Left ventricle myocardium superior (tissue), 1 donor: ENCODE measurements at regions of chr5 and their contacts with region 1.

Region 1: GRCh38 chr5:989961-990530 is 18.6 kb upstream of the NKD2 start:
- DNase-seq: peak; percentile 82
- ATAC-seq: peak; percentile 68

Region 2: DNA sequence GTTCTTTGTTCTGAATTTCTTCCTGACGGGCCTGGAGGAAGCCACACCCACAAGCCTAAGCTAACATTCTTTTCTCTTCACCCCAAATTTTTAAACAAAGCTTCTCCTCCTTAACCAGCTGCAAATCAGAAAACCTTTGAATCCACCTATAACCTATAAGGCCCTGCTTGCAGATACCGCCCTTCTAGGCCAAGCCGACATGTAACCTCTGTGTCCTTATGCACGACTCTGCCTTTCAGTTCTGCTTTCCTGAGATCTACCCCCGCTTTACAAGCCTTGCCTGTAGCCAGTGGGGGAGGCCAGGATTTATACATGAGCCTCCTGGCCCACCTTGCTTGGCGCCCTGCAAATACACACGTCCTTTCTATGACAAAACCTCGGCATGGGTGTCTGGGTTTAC is 116.7 kb before region 1 on chr5:
- intact Hi-C with region 1: no loop called
- DNase-seq: no peak
- ATAC-seq: no peak

Region 3: DNA sequence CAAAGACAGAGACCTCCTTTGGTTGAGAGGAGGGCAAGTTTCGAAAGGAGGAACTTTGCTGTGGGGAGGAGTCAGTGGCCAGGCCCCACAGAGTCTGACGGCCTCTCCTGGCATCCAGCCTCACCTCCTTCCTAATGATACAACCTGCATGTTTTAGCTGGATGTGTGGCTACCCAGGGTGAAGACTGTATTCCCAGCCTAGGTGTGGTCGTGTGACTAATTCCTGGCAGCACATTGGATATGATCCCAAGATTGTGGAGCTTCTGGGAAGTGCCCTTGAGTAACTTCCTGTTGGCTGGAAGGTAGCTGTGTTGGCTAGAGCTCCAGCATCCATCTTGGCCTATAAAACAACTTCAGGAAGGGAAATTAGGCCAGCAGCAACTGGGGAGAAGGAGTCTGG is 552.7 kb after region 1 on chr5:
- intact Hi-C with region 1: no loop called
- DNase-seq: no peak
- ATAC-seq: peak; percentile 72

Region 4: DNA sequence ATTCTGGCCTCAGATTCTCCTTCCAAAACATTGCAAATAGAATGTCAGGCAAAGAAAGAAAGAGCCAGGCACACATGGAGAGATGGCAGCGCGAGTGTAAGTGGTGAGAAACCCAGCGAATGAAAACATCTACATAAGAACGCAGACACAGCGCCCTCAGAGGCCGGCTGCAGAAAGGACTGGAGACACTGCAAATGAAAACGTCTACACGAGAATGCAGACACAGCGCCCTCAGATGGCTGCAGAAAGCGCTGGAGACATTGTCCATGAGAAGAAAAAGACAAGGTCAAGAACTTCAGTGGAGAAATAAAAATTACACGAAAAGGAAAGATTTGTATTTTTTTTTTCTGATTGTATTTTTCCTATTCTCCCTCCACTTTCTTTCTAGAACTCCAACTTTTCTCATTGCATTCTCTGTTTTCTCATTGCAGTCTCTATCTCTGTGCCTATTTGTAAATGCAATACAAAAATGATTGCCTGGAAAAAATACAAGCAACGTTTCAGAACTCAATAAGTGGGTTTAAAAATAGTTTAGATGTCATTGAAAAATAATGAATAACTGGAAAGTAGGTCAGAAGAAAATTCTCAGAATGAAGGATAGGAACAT is 651.6 kb after region 1 on chr5:
- intact Hi-C with region 1: loop called (anchors 10 kb)
- DNase-seq: peak; percentile 85
- ATAC-seq: peak; percentile 76